ENCODE measurements at regions of chr16 and their contacts with region 1.

Region 1: GRCh38 chr16:71461686-71462648 is at the start of gene ZNF23:
- DNase-seq: peak; percentile 90
- ATAC-seq: peak; percentile 97
- H3K4me3 Mint-ChIP-seq: peak within 1 kb of the TSS; percentile 93
- H3K27ac Mint-ChIP-seq: peak within 1 kb of the TSS; percentile 94
- H3K4me1 Mint-ChIP-seq: peaks cover 22% of the 10 kb centered on the region
- H3K27me3 Mint-ChIP-seq: no peaks in the 10 kb centered on the region
- CTCF ChIP-seq: no peak
- total RNA-seq, gene ZNF23: 13.3 and 14.6 TPM in 2 replicates

Region 2: GRCh38 chr16:71412270-71413160 is 49.5 kb before region 1 on chr16:
- CTCF ChIA-PET with region 1: interaction called, 4 read pairs
- POLR2A ChIA-PET with region 1: no interaction called
- intact Hi-C with region 1: loop called (anchors 1 kb)
- DNase-seq: peak; percentile 36
- ATAC-seq: peak; percentile 57
- H3K4me3 Mint-ChIP-seq: no peak overlapping the region
- H3K27ac Mint-ChIP-seq: no peak overlapping the region
- H3K4me1 Mint-ChIP-seq: peaks cover 9% of the 10 kb centered on the region
- H3K27me3 Mint-ChIP-seq: peaks cover 32% of the 10 kb centered on the region
- CTCF ChIP-seq: peak; percentile 38

Region 3: DNA sequence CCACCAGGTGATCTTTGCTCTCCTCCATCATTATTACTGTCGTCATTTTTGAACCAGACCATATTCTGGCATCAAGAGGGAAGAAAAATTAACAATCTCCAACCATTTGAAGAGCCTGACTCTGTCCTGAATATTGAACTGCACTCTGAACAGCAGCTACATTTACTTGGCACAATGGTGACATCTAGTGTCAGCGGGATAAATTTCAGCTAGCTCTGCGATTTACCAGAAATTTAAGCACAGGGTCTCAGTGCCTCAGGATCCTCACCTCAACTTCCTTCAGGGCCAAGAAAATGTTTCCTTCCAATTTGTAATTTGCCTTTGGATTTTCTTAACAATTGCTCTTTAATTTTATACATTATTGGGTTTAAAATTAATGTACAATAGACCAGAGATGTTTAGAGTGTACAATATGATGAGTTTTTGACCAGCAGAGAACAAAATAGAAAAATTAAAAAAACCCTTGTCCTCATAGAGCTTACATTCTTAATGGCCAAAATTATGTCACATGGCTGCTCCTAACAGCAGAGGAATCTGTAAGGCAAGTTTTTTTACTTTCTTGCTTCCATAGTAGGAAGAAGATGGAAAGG is 37.9 kb after region 1 on chr16:
- CTCF ChIA-PET with region 1: interaction called, 15 read pairs
- POLR2A ChIA-PET with region 1: interaction called, 3 read pairs
- intact Hi-C with region 1: loop called (anchors 5 kb)
- DNase-seq: no peak
- ATAC-seq: peak; percentile 81
- H3K4me3 Mint-ChIP-seq: no peak overlapping the region
- H3K27ac Mint-ChIP-seq: no peak overlapping the region
- H3K4me1 Mint-ChIP-seq: no peaks in the 10 kb centered on the region
- H3K27me3 Mint-ChIP-seq: peaks cover 24% of the 10 kb centered on the region
- CTCF ChIP-seq: no peak

Region 4: GRCh38 chr16:71524566-71525553 is 62.9 kb after region 1 on chr16:
- CTCF ChIA-PET with region 1: no interaction called
- POLR2A ChIA-PET with region 1: no interaction called
- intact Hi-C with region 1: no loop called
- DNase-seq: no peak
- ATAC-seq: no peak
- H3K4me3 Mint-ChIP-seq: no peak overlapping the region
- H3K27ac Mint-ChIP-seq: no peak overlapping the region
- H3K4me1 Mint-ChIP-seq: peaks cover 5% of the 10 kb centered on the region
- H3K27me3 Mint-ChIP-seq: peaks cover 31% of the 10 kb centered on the region
- CTCF ChIP-seq: no peak

Region 5: GRCh38 chr16:71723537-71724319 is 261.8 kb after region 1 on chr16:
- CTCF ChIA-PET with region 1: no interaction called
- POLR2A ChIA-PET with region 1: no interaction called
- intact Hi-C with region 1: loop called (anchors 10 kb)
- DNase-seq: peak; percentile 87
- ATAC-seq: peak; percentile 80
- H3K4me3 Mint-ChIP-seq: peak overlapping the region; percentile 85
- H3K27ac Mint-ChIP-seq: peak overlapping the region; percentile 85
- H3K4me1 Mint-ChIP-seq: peaks cover 50% of the 10 kb centered on the region
- H3K27me3 Mint-ChIP-seq: no peaks in the 10 kb centered on the region
- CTCF ChIP-seq: no peak

Measured in activated B cell treated with CpG ODN at 0.5 μM for 24 hours (primary cell).